Colonic mucosa (tissue), 4 donors: ENCODE measurements at regions of chr17 and their contacts with region 1.

Region 1: GRCh38 chr17:48374650-48375230 is 55.3 kb downstream of the SKAP1 start:
- DNase-seq: peak; percentile 66
- H3K4me3 ChIP-seq: no peak overlapping the region
- H3K27ac ChIP-seq: no peak overlapping the region
- H3K4me1 ChIP-seq: no peaks in the 10 kb centered on the region
- H3K27me3 ChIP-seq: no peaks in the 10 kb centered on the region
- CTCF ChIP-seq: peak; percentile 83

Region 2: DNA sequence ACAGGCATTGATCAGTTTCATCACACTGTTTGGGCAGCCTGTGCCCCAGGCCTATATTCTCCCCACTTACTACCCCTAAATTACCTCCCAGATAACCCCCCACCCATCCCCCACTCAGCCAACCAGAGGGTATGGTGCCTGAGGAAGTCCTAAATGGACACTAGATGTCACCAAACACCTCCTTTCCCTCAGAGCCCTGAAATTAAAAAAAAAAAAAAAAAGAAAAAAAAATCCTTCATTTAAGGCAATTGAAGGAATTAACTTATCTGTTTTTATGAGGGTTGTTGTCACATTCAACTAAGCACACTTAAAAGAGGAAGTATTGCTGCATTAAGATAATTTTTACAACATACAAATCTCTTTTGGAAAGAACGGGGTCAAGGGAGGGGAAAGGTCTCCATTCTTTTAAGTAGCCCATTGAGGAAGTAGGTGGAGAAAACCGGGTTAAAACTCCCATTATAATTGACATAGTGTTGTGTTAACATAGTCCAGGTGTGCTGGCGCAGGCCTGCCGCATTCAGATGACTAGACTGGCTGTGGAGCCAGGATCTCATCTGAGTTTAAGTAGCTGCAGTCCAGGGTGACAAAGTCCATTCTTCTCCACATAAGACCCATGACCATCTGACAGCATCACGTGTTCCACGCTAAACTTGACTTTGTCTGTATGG is 220.9 kb before region 1 on chr17:
- intact Hi-C with region 1: loop called (anchors 10 kb)
- DNase-seq: peak; percentile 74
- H3K4me3 ChIP-seq: no peak overlapping the region
- H3K27ac ChIP-seq: peak overlapping the region; percentile 51
- H3K4me1 ChIP-seq: no peaks in the 10 kb centered on the region
- H3K27me3 ChIP-seq: no peaks in the 10 kb centered on the region
- CTCF ChIP-seq: peak; percentile 44

Region 3: GRCh38 chr17:48215583-48216139 is 159.1 kb before region 1 on chr17:
- intact Hi-C with region 1: loop called (anchors 10 kb)
- DNase-seq: peak; percentile 26
- H3K4me3 ChIP-seq: no peak overlapping the region
- H3K27ac ChIP-seq: no peak overlapping the region
- H3K4me1 ChIP-seq: no peaks in the 10 kb centered on the region
- H3K27me3 ChIP-seq: no peaks in the 10 kb centered on the region
- CTCF ChIP-seq: peak; percentile 65